PC-3 (cell line): ENCODE measurements at regions of chr10 and their contacts with region 1.

Region 1: DNA sequence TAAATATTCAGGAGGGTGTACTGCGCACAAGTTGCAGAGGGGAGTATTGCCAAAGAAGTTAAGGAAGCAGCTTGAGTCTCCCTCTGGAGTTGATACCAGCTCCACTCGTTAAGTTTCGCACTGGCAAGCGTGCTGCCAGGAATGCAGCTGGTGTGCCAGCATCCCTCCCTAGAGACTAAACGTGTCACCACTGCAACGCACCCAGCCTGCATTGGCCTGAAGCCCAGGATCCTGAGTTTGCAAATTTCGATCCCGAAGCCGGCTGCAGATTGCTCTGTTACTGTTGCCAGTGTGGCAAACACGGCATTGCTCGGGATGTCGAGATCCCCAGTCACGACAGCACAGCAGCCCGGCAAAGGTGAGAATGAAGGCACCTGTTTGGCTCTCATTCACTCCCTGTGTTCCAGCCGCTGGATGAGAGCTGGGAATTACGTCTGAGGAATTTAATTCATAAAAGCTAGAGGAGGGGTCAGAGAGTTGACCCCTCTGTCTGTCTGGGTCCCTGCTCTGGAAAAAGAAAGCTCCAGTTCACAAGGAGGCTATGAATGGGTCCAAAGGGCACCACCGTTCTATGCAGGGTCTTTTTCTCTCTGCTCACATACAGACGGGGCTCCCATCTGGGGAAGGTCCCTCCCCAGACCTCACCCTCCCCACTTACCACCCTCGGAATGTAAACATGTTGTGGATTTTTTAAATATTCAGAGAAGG is 61.0 kb downstream of the NRP1 start:
- DNase-seq: peak; percentile 100
- ATAC-seq: peak; percentile 87
- H3K4me3 ChIP-seq: peak overlapping the region; percentile 47
- H3K27ac ChIP-seq: peak overlapping the region; percentile 71
- H3K4me1 ChIP-seq: peaks cover 66% of the 10 kb centered on the region
- H3K27me3 ChIP-seq: no peaks in the 10 kb centered on the region
- CTCF ChIP-seq: no peak

Region 2: GRCh38 chr10:31490858-31491504 is 1782.5 kb before region 1 on chr10:
- CTCF ChIA-PET with region 1: no interaction called
- POLR2A ChIA-PET with region 1: no interaction called
- intact Hi-C with region 1: no loop called
- DNase-seq: peak; percentile 67
- ATAC-seq: 0 out of 2 replicates have a peak, but pooled peaks have one; percentile 46
- H3K4me3 ChIP-seq: no peak overlapping the region
- H3K27ac ChIP-seq: no peak overlapping the region
- H3K4me1 ChIP-seq: no peaks in the 10 kb centered on the region
- H3K27me3 ChIP-seq: no peaks in the 10 kb centered on the region
- CTCF ChIP-seq: peak; percentile 73

Region 3: DNA sequence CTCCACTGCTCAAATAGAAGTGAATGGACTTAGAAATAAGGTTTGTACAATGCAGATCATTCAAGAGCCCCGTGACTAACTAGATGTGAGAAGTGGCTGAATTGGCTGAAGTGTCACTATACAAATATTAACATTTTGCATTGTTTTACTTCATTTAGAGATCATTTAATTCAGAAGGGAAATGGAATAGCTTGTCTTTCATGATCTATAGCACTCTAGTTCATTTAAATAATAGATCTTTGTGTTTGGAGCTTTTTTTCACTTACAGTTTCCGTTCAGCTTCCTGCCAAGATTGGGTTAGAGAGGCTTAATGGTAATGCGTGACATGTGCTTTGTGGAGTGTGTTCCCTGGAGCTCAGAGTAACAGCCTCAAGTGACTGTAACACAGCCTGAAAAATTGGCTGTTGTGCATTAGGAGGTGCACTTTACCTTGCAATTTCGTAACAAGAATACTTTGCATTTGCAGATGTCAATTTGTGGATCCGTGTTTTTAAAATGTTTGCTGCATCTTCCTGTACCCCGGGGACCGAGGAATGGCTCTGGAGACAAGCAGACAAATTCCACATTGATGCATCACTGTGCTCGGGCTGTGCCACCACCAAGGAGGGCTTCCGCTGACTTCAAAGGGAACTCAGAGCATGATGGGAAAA is 109.3 kb before region 1 on chr10:
- CTCF ChIA-PET with region 1: interaction called, 4 read pairs
- POLR2A ChIA-PET with region 1: no interaction called
- intact Hi-C with region 1: loop called (anchors 1 kb)
- DNase-seq: peak; percentile 94
- ATAC-seq: peak; percentile 88
- H3K4me3 ChIP-seq: peak overlapping the region; percentile 0; the same call in 1 of the 2 replicates
- H3K27ac ChIP-seq: peak overlapping the region; percentile 44
- H3K4me1 ChIP-seq: peaks cover 19% of the 10 kb centered on the region
- H3K27me3 ChIP-seq: no peaks in the 10 kb centered on the region
- CTCF ChIP-seq: no peak

Region 4: GRCh38 chr10:33216661-33217427 is 56.6 kb before region 1 on chr10:
- CTCF ChIA-PET with region 1: interaction called, 10 read pairs
- POLR2A ChIA-PET with region 1: interaction called, 3 read pairs
- intact Hi-C with region 1: loop called (anchors 1 kb)
- DNase-seq: peak; percentile 100
- ATAC-seq: peak; percentile 91
- H3K4me3 ChIP-seq: peak overlapping the region; percentile 6; the same call in 1 of the 2 replicates
- H3K27ac ChIP-seq: peak overlapping the region; percentile 65
- H3K4me1 ChIP-seq: peaks cover 46% of the 10 kb centered on the region
- H3K27me3 ChIP-seq: no peaks in the 10 kb centered on the region
- CTCF ChIP-seq: no peak

Region 5: GRCh38 chr10:33248638-33249037 is 24.8 kb before region 1 on chr10:
- CTCF ChIA-PET with region 1: interaction called, 7 read pairs
- POLR2A ChIA-PET with region 1: interaction called, 23 read pairs
- intact Hi-C with region 1: loop called (anchors 1 kb)
- DNase-seq: peak; percentile 100
- ATAC-seq: peak; percentile 43
- H3K4me3 ChIP-seq: no peak overlapping the region
- H3K27ac ChIP-seq: peak overlapping the region; percentile 65
- H3K4me1 ChIP-seq: peaks cover 52% of the 10 kb centered on the region
- H3K27me3 ChIP-seq: no peaks in the 10 kb centered on the region
- CTCF ChIP-seq: no peak

Region 6: DNA sequence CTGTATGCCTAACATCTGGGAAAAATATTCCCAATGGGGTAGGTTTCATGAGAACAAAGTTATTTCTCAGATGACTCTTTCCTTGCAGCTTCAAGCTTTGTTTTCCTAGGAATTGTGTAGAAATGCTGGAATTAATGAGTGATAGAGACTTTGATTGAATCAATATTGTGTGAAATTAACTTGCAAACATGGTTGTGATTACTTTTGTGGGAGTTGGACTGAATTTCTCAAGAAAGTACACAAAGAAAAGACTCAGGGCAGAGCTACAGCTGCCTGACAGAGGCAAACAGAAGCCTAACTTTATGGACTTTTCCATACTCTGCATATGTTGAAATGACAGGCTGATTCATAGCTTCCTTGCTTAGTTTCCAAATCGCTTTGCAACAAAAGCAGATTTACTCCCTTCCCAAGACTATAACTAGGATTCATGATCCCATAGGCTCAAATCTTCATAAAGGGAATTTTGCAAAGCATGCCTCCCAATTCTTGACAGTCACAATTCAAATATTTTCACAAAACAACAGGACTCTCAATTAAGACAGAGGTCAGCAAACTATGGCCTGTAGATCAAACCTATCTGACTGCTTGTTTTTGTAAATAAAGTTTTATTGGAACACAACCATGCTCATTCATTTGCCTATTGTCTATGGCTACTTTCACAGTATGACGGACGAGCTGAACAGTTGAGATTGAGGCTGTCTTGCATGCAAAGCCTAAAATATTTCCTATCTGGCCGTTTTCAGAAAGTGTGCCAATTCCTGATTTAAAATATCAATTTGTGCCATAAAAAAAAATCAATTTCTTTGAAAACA is 33.5 kb after region 1 on chr10:
- CTCF ChIA-PET with region 1: no interaction called
- POLR2A ChIA-PET with region 1: no interaction called
- intact Hi-C with region 1: loop called (anchors 1 kb)
- DNase-seq: peak; percentile 86
- ATAC-seq: peak; percentile 59
- H3K4me3 ChIP-seq: no peak overlapping the region
- H3K27ac ChIP-seq: peak overlapping the region; percentile 52
- H3K4me1 ChIP-seq: peaks cover 21% of the 10 kb centered on the region
- H3K27me3 ChIP-seq: no peaks in the 10 kb centered on the region
- CTCF ChIP-seq: no peak